Endothelial cell of umbilical vein (primary cell): ENCODE measurements at regions of chr20 and their contacts with region 1.

Region 1: GRCh38 chr20:49384437-49385088 is 97.9 kb downstream of the KCNB1 start:
- DNase-seq: peak; percentile 56
- H3K4me3 ChIP-seq: no peak overlapping the region
- H3K27ac ChIP-seq: no peak overlapping the region
- H3K4me1 ChIP-seq: no peaks in the 10 kb centered on the region
- H3K27me3 ChIP-seq: peaks cover 0 to 3% of the 10 kb centered on the region in 2 experiments
- CTCF ChIP-seq: peak; percentile 83 to 84
- POLR2A ChIP-seq: no peak

Region 2: GRCh38 chr20:49338061-49338460 is 46.5 kb before region 1 on chr20:
- CTCF ChIA-PET with region 1: no interaction called
- POLR2A ChIA-PET with region 1: no interaction called
- dilution Hi-C with region 1: no loop called
- intact Hi-C with region 1: loop called (anchors 2 kb)
- DNase-seq: no peak
- H3K4me3 ChIP-seq: no peak overlapping the region
- H3K27ac ChIP-seq: no peak overlapping the region
- H3K4me1 ChIP-seq: no peaks in the 10 kb centered on the region
- H3K27me3 ChIP-seq: peaks cover 0 to 2% of the 10 kb centered on the region in 2 experiments
- CTCF ChIP-seq: no peak
- POLR2A ChIP-seq: no peak

Region 3: DNA sequence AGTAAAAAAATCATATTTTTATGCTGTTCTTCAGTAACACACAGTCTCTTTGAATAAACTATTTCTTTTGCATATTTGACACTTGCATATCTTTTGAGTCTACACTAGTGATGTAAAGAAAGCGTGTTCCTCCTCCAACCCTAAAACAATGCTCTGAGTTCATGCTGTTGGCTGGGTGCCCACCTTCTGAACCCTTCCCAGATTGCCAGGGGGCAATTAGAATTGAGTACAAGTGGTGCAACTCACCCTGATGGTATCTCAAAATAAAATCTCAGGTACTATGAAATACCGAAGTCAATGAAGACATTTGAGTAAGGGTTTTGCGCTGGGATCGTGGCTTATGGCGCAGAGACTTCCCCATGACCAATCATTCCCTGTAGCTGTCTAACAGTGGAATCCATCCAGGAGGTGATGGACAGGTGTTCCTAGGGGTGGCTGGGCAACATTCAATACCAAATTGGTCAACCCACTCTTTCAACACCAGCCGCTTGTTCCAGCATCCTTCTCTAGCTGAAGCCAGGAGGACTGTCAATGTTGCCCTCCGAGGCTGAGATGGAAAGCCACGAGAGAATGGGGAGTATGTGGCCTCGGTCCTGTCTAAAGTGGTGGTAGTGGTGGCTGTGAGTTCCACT is 12.4 kb before region 1 on chr20:
- CTCF ChIA-PET with region 1: interaction called, 29 read pairs
- POLR2A ChIA-PET with region 1: no interaction called
- dilution Hi-C with region 1: no loop called
- intact Hi-C with region 1: no loop called
- DNase-seq: no peak
- H3K4me3 ChIP-seq: no peak overlapping the region
- H3K27ac ChIP-seq: no peak overlapping the region
- H3K4me1 ChIP-seq: no peaks in the 10 kb centered on the region
- H3K27me3 ChIP-seq: peaks cover 12 to 13% of the 10 kb centered on the region in 2 experiments
- CTCF ChIP-seq: no peak
- POLR2A ChIP-seq: no peak

Region 4: DNA sequence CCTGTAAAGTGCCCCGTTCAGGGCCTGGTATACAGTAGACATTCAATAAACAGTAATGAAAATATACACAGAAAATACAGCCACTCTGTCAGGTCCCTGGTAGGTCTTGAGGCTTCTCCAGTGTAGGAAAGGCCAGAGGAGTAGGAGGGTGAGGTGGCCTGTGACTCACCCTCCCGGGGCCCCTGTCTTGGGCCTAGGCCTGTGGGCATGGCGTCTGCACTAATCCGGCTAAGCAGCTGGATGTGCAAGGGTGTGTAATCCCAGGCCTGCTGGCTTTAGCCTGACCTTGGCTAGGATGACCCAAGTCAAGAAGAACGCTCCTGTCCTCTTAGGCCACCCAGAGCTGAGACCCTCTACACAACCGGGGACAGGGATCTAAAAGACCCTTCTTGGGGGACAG is 13.0 kb after region 1 on chr20:
- CTCF ChIA-PET with region 1: interaction called, 23 read pairs
- POLR2A ChIA-PET with region 1: no interaction called
- dilution Hi-C with region 1: no loop called
- intact Hi-C with region 1: no loop called
- DNase-seq: no peak
- H3K4me3 ChIP-seq: no peak overlapping the region
- H3K27ac ChIP-seq: no peak overlapping the region
- H3K4me1 ChIP-seq: no peaks in the 10 kb centered on the region
- H3K27me3 ChIP-seq: peaks cover 0 to 2% of the 10 kb centered on the region in 2 experiments
- CTCF ChIP-seq: no peak
- POLR2A ChIP-seq: no peak